Heart left ventricle (tissue), 16 donors: ENCODE measurements at regions of chr1 and their contacts with region 1.

Region 1: DNA sequence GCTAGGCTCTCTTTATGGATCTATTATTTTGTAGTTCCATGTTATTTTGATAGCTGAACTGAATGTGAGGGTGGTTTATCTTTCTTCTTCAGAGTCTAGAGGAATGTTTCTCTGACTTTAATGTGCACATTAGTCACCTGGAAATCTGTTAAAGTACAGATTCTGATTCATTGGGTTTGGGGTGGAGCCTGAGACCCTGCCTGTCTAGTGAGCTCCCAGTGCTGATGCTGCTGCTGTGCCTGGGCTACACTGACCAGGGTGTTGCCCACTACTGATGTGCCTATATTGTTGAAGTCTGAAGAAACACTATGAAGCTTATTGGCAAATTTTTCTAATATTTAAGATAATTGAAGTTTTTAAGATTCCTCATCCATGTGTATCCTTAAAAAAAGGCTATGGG is 35.9 kb downstream of the CD46 start:
- DNase-seq: no peak
- ATAC-seq: no peak
- H3K4me3 ChIP-seq: no peak overlapping the region
- H3K27ac ChIP-seq: no peak overlapping the region
- H3K4me1 ChIP-seq: no peaks in the 10 kb centered on the region
- H3K27me3 ChIP-seq: no peaks in the 10 kb centered on the region
- CTCF ChIP-seq: no peak
- POLR2A ChIP-seq: no peak

Region 2: GRCh38 chr1:207754974-207755689 is 32.6 kb before region 1 on chr1:
- intact Hi-C with region 1: loop called in 1 of 10 experiments (anchors 5 kb)
- DNase-seq: no peak
- ATAC-seq: no peak
- H3K4me3 ChIP-seq: no peak overlapping the region
- H3K27ac ChIP-seq: peak overlapping the region in 1 of 12 donors; percentile 71
- H3K4me1 ChIP-seq: peaks cover 0 to 61% (median 42%) of the 10 kb centered on the region in 12 donors
- H3K27me3 ChIP-seq: no peaks in the 10 kb centered on the region
- CTCF ChIP-seq: no peak
- POLR2A ChIP-seq: no peak

Region 3: DNA sequence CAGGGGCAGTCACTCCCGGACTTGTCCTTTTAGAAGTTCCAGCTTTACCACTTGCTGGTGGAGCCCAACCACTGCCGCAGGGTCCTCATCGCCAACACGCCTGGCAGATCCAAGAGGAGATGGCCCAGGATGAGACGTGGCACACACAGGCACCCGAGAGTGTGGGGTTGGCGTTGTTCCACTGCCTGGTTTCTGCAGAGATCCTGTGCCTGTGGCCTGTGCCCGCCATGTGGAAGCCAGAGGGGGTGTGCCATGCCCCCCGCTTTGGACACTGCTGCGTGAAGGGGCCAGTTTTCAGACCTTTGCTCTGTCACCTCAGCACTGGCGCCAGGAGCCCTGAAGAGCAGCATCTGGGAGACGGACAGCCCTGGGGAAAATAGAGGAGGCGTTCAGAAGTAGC is 25.2 kb before region 1 on chr1:
- intact Hi-C with region 1: loop called in 1 of 10 experiments (anchors 1 kb)
- DNase-seq: no peak
- ATAC-seq: peak in 1 of 4 donors; percentile 27
- H3K4me3 ChIP-seq: no peak overlapping the region
- H3K27ac ChIP-seq: no peak overlapping the region
- H3K4me1 ChIP-seq: peaks cover 0 to 8% (median 0%) of the 10 kb centered on the region in 12 donors
- H3K27me3 ChIP-seq: no peaks in the 10 kb centered on the region
- CTCF ChIP-seq: no peak
- POLR2A ChIP-seq: no peak

Region 4: GRCh38 chr1:208149776-208150514 is 362.2 kb after region 1 on chr1:
- intact Hi-C with region 1: no loop called
- DNase-seq: peak in 4 of 5 donors; percentile 40 to 72 (median 41)
- ATAC-seq: peak; percentile 8 to 57 (median 40)
- H3K4me3 ChIP-seq: no peak overlapping the region
- H3K27ac ChIP-seq: peak overlapping the region in 3 of 12 donors; percentile 1 to 67 (median 14)
- H3K4me1 ChIP-seq: peaks cover 0 to 56% (median 38%) of the 10 kb centered on the region in 12 donors
- H3K27me3 ChIP-seq: no peaks in the 10 kb centered on the region
- CTCF ChIP-seq: no peak
- POLR2A ChIP-seq: no peak